Body of pancreas (tissue), 4 donors: ENCODE measurements at regions of chr17 and their contacts with region 1.

Region 1: GRCh38 chr17:45006927-45007461 is 38.9 kb upstream of the C1QL1 start:
- DNase-seq: no peak
- ATAC-seq: no peak
- H3K4me3 ChIP-seq: no peak overlapping the region
- H3K27ac ChIP-seq: no peak overlapping the region
- H3K4me1 ChIP-seq: peaks cover 11% of the 10 kb centered on the region
- H3K27me3 ChIP-seq: no peaks in the 10 kb centered on the region
- CTCF ChIP-seq: no peak
- POLR2A ChIP-seq: no peak

Region 2: GRCh38 chr17:44932496-44933097 is 74.4 kb before region 1 on chr17:
- intact Hi-C with region 1: loop called (anchors 5 kb)
- DNase-seq: no peak
- ATAC-seq: no peak
- H3K4me3 ChIP-seq: no peak overlapping the region
- H3K27ac ChIP-seq: no peak overlapping the region
- H3K4me1 ChIP-seq: no peaks in the 10 kb centered on the region
- H3K27me3 ChIP-seq: no peaks in the 10 kb centered on the region
- CTCF ChIP-seq: no peak
- POLR2A ChIP-seq: no peak